Thyroid gland (tissue), 4 donors: ENCODE measurements at regions of chr2 and their contacts with region 1.

Region 1: DNA sequence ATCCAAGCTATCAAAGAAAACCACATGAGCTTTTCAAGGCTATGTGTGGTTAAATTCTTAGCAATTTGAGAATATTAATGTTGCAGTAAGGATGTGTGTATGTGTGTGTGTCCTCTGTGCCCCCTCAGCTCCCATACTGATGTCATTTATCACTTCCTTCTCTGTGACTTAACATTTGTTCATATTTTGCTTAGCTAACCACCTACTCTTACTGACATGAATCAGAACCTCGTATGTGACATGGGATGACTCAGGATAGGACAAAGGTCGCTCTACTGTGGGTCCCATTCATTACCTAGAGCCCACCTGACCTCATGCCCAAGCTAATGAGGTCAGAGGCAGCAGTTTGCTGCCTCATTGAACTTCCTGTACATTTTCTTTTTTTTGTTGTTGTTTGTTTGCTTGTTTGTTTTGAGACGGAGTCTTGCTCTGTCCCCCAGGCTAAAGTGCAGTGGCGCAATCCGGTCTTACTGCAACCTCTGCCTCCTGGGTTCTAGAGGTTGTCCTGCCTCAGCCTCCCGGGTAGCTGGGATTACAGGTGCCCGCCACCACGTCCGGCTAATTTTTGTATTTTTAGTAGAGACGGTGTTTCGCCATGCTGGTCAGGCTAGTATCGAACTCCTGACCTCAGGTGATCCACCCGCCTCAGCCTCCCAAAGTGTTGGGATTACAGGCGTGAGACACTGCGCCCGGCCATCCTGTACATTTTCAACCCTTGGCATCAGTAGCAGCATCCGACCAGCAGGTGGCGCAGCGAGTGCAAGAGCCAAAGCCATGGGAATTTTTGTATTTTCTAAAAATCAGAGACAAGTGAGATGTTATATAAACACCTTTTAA is 36.4 kb downstream of the MOGAT1 start:
- DNase-seq: peak; percentile 76 to 82
- H3K4me3 ChIP-seq: no peak overlapping the region
- H3K27ac ChIP-seq: no peak overlapping the region
- H3K4me1 ChIP-seq: peaks cover 0 to 3% of the 10 kb centered on the region in 2 donors
- H3K27me3 ChIP-seq: no peaks in the 10 kb centered on the region
- CTCF ChIP-seq: peak; percentile 85 to 97 (median 90)
- POLR2A ChIP-seq: no peak

Region 2: DNA sequence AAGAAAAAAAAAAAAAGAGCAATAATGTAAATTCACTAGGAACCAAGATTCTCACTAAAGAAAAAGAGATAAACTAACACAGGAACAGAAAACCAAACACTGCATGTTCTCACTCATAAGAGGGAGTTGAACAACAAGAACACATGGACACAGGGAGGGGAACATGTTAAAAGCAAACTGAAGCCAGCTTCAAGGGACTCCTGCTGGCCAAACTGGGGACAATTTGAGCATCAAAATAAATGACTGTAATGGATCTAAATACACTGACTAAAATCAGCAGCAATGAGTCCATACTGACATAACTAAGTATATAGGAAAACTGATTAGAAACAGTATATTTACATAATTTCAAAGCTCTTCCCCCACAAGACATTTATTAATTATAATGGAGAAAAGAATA is 125.0 kb before region 1 on chr2:
- intact Hi-C with region 1: no loop called
- DNase-seq: no peak
- H3K4me3 ChIP-seq: no peak overlapping the region
- H3K27ac ChIP-seq: no peak overlapping the region
- H3K4me1 ChIP-seq: no peaks in the 10 kb centered on the region
- H3K27me3 ChIP-seq: no peaks in the 10 kb centered on the region
- CTCF ChIP-seq: peak in 5 of 6 experiments; percentile 9 to 40 (median 22)
- POLR2A ChIP-seq: no peak

Region 3: DNA sequence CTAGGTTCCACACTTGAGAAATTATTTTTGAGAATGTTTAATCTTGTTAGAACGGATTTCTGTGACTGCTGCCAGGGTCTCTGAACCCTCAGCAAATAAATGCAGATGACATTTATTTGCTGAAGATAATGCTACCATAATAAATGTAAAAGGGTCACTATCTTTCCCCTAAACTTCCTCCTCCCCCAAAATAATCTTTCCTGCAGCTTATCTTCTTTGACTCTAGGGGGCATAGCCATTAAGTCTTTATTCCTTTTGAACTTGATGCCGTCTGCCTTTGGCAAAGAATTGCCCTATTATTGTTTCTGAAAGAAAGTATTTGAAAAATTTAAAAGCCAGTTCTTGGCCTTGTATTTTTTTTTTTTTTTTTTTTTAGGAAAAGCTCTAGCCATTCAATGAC is 89.4 kb after region 1 on chr2:
- intact Hi-C with region 1: loop called (anchors 10 kb)
- DNase-seq: no peak
- H3K4me3 ChIP-seq: no peak overlapping the region
- H3K27ac ChIP-seq: no peak overlapping the region
- H3K4me1 ChIP-seq: peaks cover 20% of the 10 kb centered on the region in 2 donors
- H3K27me3 ChIP-seq: no peaks in the 10 kb centered on the region
- CTCF ChIP-seq: peak in 5 of 6 experiments; percentile 14 to 65 (median 52)
- POLR2A ChIP-seq: no peak

Region 4: GRCh38 chr2:222807431-222807830 is 99.5 kb after region 1 on chr2:
- intact Hi-C with region 1: no loop called
- DNase-seq: no peak
- H3K4me3 ChIP-seq: no peak overlapping the region
- H3K27ac ChIP-seq: no peak overlapping the region
- H3K4me1 ChIP-seq: no peaks in the 10 kb centered on the region
- H3K27me3 ChIP-seq: no peaks in the 10 kb centered on the region
- CTCF ChIP-seq: no peak
- POLR2A ChIP-seq: no peak

Region 5: DNA sequence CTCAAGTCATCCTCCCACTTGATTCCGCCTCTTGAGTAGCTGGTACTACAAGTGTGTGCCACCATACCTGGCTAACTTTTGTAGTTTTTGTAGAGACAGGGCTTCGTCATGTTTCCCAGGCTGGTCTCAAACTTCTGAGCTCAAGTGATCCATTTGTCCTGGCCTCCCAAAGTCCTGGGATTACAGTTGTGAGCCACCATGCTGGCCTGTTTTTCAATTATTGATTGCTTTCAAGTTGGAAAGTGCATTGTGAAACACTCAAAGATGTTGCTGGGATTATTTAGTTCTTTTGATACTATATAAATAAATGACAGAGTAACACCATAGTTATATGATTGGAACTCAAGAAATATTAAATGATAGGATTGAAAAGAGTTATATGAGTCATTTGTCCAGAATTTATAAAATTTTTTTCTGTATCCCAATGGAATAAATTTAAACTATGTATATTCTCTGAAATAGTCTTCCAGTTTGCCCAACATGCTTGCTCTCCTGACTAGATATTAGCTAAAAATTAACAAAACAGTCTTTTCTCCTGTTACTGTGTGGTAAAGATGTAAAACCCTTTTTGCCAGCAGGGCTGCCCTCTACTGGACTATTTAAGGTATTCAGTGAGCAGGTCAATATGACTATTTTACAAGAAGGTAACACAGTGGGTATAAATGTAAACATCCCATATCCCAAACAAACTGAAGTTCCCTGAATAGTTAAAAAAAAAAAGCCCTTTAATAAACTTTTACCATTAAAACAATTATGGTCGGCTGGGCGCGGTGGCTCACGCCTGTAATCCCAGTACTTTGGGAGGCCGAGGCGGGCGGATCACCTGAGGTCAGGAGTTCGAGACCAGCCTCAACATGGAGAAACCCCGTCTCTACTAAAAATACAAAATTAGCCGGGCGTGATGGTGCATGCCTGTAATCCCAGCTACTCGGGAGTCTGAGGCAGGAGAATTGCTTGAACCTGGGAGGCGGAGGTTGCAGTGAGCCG is 195.6 kb after region 1 on chr2:
- intact Hi-C with region 1: loop called (anchors 10 kb)
- DNase-seq: peak; percentile 44 to 59
- H3K4me3 ChIP-seq: no peak overlapping the region
- H3K27ac ChIP-seq: peak overlapping the region in 1 of 3 donors; percentile 14
- H3K4me1 ChIP-seq: peaks cover 29 to 32% of the 10 kb centered on the region in 2 donors
- H3K27me3 ChIP-seq: no peaks in the 10 kb centered on the region
- CTCF ChIP-seq: peak in 4 of 6 experiments; percentile 39 to 57 (median 52)
- POLR2A ChIP-seq: no peak